MCF 10A (cell line): ENCODE measurements at regions of chr2 and their contacts with region 1.

Region 1: GRCh38 chr2:64144057-64145013 is at the start of gene PELI1:
- DNase-seq: peak; percentile 96
- H3K4me3 Mint-ChIP-seq: peak within 1 kb of the TSS; percentile 88
- H3K27ac Mint-ChIP-seq: peak within 1 kb of the TSS; percentile 95
- H3K4me1 Mint-ChIP-seq: peaks cover 6% of the 10 kb centered on the region
- H3K27me3 Mint-ChIP-seq: no peaks in the 10 kb centered on the region
- CTCF ChIP-seq: peak; percentile 20
- total RNA-seq, gene PELI1: 13.5 and 16.3 TPM in 2 replicates

Region 2: GRCh38 chr2:64062829-64063228 is 81.5 kb before region 1 on chr2:
- CTCF ChIA-PET with region 1: interaction called, 3 read pairs
- POLR2A ChIA-PET with region 1: interaction called, 7 read pairs
- intact Hi-C with region 1: loop called (anchors 5 kb)
- DNase-seq: peak; percentile 91
- H3K4me3 Mint-ChIP-seq: no peak overlapping the region
- H3K27ac Mint-ChIP-seq: peak overlapping the region; percentile 33
- H3K4me1 Mint-ChIP-seq: peaks cover 38% of the 10 kb centered on the region
- H3K27me3 Mint-ChIP-seq: no peaks in the 10 kb centered on the region
- CTCF ChIP-seq: no peak

Region 3: DNA sequence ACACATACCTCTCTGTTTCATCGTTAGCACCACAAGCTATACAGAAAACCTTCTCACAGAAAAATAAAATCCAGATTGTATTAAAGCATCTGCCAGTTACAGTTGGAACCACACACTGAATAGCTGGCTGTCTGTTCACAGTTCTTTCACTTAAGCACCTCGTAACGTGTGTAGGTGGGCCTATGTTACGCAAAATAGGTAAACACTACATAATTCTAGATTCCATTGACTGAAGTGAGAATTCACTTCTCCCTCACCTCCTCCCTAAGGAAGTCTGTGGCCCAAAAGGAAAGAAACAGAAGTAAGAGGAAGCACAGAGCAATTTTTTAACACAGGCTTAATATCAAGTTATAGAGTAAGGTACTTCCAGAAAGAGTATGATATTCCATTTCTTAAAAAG is 25.0 kb before region 1 on chr2:
- CTCF ChIA-PET with region 1: interaction called, 5 read pairs
- POLR2A ChIA-PET with region 1: interaction called, 13 read pairs
- intact Hi-C with region 1: no loop called
- DNase-seq: no peak
- H3K4me3 Mint-ChIP-seq: no peak overlapping the region
- H3K27ac Mint-ChIP-seq: peak overlapping the region; percentile 51
- H3K4me1 Mint-ChIP-seq: peaks cover 29% of the 10 kb centered on the region
- H3K27me3 Mint-ChIP-seq: no peaks in the 10 kb centered on the region
- CTCF ChIP-seq: no peak

Region 4: DNA sequence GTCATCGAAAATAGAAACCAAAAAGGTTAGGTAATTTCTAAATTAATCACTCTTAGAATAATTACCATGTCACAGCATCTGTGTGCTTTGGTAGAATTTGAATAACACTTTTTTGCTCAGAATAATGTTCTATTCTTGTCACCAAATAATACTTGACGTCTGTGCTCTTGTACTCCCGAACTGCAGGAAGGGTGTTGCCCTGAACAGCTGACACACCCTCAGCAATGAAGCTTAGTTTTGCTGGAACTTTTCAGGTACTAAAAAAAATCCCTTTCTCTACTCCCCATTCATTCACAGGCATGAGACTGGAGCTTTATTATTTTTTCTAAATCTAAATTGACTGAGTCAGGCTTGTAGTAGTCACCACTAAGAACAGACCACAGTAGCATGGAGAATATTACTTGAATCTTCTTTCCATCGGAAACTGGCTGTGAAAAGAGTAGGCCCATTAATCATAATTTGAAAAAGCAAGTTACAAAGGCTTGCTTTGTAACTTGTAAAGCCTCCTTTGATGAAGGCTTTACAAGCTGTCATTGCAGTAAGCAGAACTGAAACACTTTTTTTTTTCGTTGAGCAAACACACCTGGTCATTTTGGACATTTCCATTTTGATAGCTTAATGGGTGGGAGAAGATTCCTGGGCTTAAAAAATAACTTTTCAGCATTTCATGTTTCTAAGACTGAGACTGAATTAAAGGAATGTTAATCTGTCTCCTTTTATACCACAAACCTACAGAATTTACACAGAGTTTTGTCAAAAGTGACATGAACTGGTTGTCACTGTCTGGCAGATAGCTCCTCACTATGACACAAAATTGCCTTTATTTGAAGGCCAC is 70.2 kb after region 1 on chr2:
- CTCF ChIA-PET with region 1: interaction called, 4 read pairs
- POLR2A ChIA-PET with region 1: interaction called, 11 read pairs
- intact Hi-C with region 1: loop called (anchors 5 kb)
- DNase-seq: peak; percentile 19
- H3K4me3 Mint-ChIP-seq: no peak overlapping the region
- H3K27ac Mint-ChIP-seq: peak overlapping the region; percentile 28
- H3K4me1 Mint-ChIP-seq: peaks cover 31% of the 10 kb centered on the region
- H3K27me3 Mint-ChIP-seq: no peaks in the 10 kb centered on the region
- CTCF ChIP-seq: no peak

Region 5: GRCh38 chr2:64311948-64312621 is 167.8 kb after region 1 on chr2:
- CTCF ChIA-PET with region 1: interaction called, 15 read pairs
- POLR2A ChIA-PET with region 1: interaction called, 17 read pairs
- intact Hi-C with region 1: loop called (anchors 1 kb)
- DNase-seq: peak; percentile 96
- H3K4me3 Mint-ChIP-seq: no peak overlapping the region
- H3K27ac Mint-ChIP-seq: peak overlapping the region; percentile 39
- H3K4me1 Mint-ChIP-seq: peaks cover 23% of the 10 kb centered on the region
- H3K27me3 Mint-ChIP-seq: no peaks in the 10 kb centered on the region
- CTCF ChIP-seq: peak; percentile 56

Region 6: GRCh38 chr2:66080127-66080526 is 1935.8 kb after region 1 on chr2:
- CTCF ChIA-PET with region 1: no interaction called
- POLR2A ChIA-PET with region 1: no interaction called
- intact Hi-C with region 1: no loop called
- DNase-seq: no peak
- H3K4me3 Mint-ChIP-seq: no peak overlapping the region
- H3K27ac Mint-ChIP-seq: no peak overlapping the region
- H3K4me1 Mint-ChIP-seq: no peaks in the 10 kb centered on the region
- H3K27me3 Mint-ChIP-seq: peaks cover 21% of the 10 kb centered on the region
- CTCF ChIP-seq: no peak